Activated CD4-positive, alpha-beta T cell treated with anti-CD3 and anti-CD28 coated beads for 36 hours (primary cell): ENCODE measurements at regions of chr19 and their contacts with region 1.

Region 1: GRCh38 chr19:36973021-36973843 is 57.1 kb downstream of the ZNF568 start:
- DNase-seq: peak; percentile 92
- ATAC-seq: peak; percentile 98
- H3K4me3 Mint-ChIP-seq: peak overlapping the region; percentile 81
- H3K27ac Mint-ChIP-seq: peak overlapping the region; percentile 92
- H3K4me1 Mint-ChIP-seq: peaks cover 6% of the 10 kb centered on the region
- H3K27me3 Mint-ChIP-seq: no peaks in the 10 kb centered on the region

Region 2: DNA sequence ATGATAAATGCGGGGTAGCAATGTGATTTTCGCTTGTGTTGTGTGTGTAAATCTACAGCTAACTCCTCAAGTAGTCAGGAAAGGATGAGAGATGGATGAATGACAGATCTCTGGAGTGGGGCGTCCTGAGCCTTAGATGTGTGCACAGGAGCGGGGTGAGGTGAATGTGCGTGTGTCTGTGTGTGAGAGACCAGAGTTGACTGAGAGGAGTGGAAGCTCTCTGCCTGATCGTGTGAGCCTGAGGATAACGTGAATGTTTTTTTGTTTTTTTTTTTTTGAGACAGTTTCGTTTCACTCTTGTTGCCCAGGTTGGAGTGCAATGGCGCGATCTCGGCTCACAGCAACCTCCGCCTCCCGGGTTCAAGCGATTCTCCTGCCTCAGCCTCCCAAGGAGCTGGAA is 307.4 kb before region 1 on chr19:
- CTCF ChIA-PET with region 1: no interaction called
- POLR2A ChIA-PET with region 1: no interaction called
- intact Hi-C with region 1: loop called in 1 of 2 experiments (anchors 1 kb)
- DNase-seq: no peak
- ATAC-seq: no peak
- H3K4me3 Mint-ChIP-seq: peak overlapping the region; percentile 98
- H3K27ac Mint-ChIP-seq: peak overlapping the region; percentile 99
- H3K4me1 Mint-ChIP-seq: peaks cover 26% of the 10 kb centered on the region
- H3K27me3 Mint-ChIP-seq: no peaks in the 10 kb centered on the region

Region 3: GRCh38 chr19:36850559-36851442 is 122.4 kb before region 1 on chr19 and contains the start of gene ZNF345:
- CTCF ChIA-PET with region 1: no interaction called
- POLR2A ChIA-PET with region 1: no interaction called
- intact Hi-C with region 1: loop called in 1 of 2 experiments (anchors 1 kb)
- DNase-seq: peak; percentile 91
- ATAC-seq: peak; percentile 82
- H3K4me3 Mint-ChIP-seq: no peak within 1 kb of the TSS
- H3K27ac Mint-ChIP-seq: no peak within 1 kb of the TSS
- H3K4me1 Mint-ChIP-seq: peaks cover 10% of the 10 kb centered on the region
- H3K27me3 Mint-ChIP-seq: no peaks in the 10 kb centered on the region
- total RNA-seq, gene ZNF345: 3.5 to 4.6 TPM

Region 4: DNA sequence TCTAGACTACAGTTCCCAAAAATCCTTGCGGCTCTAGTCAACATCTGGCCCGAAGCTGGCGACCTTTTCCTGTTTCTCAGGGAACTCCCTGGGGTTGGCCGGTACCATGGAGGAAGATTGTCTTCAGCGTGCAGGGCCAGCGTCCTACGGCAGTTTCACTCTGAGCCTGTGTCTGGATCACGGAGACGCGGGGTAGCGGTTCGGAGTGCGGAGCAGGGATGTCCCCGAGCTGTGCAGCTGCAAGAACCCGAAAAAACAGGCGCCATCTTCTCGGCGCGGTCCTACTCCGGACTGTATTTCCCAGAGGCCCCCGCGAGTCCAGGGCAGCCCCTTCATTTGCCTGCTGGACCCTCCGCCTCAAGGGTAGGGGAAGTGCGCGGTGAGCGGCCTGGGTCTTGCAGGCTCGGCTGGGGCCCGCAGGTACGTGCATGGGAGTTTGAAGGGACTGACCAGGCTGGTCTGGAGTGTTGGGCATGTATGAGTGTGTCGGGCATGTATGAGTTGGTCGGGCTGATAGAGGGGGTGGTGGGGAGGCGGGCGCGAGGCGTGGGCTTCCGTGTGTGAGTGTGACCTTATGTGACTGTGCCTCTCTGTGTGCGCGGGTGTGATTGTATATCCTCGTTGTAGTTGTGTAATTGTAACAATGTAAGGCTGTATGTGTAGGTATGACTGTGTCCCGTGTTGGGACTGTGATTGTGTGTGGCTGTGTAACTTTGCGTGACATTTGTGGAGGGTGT is 244.8 kb after region 1 on chr19 and contains the start of gene ZNF383:
- CTCF ChIA-PET with region 1: no interaction called
- POLR2A ChIA-PET with region 1: interaction called, 3 read pairs
- intact Hi-C with region 1: loop called in 1 of 2 experiments (anchors 1 kb)
- DNase-seq: peak; percentile 89
- ATAC-seq: peak; percentile 87
- H3K4me3 Mint-ChIP-seq: peak within 1 kb of the TSS; percentile 93
- H3K27ac Mint-ChIP-seq: peak within 1 kb of the TSS; percentile 99
- H3K4me1 Mint-ChIP-seq: peaks cover 24% of the 10 kb centered on the region
- H3K27me3 Mint-ChIP-seq: no peaks in the 10 kb centered on the region
- total RNA-seq, gene ZNF383: 8.5 to 9.2 TPM

Region 5: DNA sequence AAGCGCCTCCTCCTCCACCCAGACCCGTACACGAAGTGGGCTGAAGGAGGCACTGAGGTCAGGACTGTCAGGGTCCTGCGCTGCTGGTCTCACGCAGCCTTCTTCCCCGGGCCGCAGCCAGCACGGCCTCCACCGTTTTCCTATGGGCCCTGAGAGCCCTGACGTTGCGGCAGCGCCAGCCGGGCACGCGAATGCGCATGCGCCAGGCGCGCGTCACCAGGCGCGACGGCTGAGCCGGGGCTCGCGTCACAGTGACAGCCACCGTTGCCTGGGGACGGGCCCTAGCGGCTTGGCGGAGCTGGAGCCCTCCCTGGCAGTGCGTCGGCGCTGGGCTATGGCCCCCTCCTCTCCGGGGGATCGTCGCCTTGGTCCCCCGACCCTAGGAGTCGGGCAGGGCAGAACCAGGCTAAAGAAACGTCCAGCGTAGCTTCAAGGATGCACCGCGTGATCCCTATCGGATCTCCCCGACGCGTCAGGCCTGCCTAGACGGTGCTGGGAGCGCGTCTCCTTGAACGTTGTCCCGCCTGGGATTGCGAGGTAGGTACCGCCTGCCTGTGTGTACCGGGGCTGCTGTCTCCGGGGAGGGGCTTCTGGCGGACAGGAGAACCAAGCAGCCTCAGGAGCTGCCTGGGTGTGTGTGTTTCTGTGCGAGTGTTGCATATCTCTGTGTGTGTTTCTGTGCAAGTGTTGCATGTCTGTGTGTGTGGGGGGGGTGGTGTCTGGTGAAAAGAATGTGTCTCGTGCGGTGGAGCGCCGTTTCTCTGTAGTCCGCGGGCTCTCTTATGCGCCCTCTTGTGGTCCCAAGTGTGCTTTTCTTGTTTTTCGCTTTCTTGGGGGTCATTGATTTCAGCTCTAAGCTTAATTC is 578.1 kb after region 1 on chr19:
- CTCF ChIA-PET with region 1: no interaction called
- POLR2A ChIA-PET with region 1: no interaction called
- intact Hi-C with region 1: loop called in 1 of 2 experiments (anchors 1 kb)
- DNase-seq: peak; percentile 87
- ATAC-seq: peak; percentile 86
- H3K4me3 Mint-ChIP-seq: peak overlapping the region; percentile 84
- H3K27ac Mint-ChIP-seq: peak overlapping the region; percentile 87
- H3K4me1 Mint-ChIP-seq: peaks cover 3% of the 10 kb centered on the region
- H3K27me3 Mint-ChIP-seq: no peaks in the 10 kb centered on the region